ENCODE measurements at regions of chr6 and their contacts with region 1.

Region 1: GRCh38 chr6:135909737-135910387 is 58.4 kb downstream of the PDE7B start:
- DNase-seq: no peak
- ATAC-seq: peak; percentile 86
- H3K4me3 Mint-ChIP-seq: no peak overlapping the region
- H3K27ac Mint-ChIP-seq: no peak overlapping the region
- H3K4me1 Mint-ChIP-seq: peaks cover 2% of the 10 kb centered on the region
- H3K27me3 Mint-ChIP-seq: no peaks in the 10 kb centered on the region
- CTCF ChIP-seq: no peak

Region 2: DNA sequence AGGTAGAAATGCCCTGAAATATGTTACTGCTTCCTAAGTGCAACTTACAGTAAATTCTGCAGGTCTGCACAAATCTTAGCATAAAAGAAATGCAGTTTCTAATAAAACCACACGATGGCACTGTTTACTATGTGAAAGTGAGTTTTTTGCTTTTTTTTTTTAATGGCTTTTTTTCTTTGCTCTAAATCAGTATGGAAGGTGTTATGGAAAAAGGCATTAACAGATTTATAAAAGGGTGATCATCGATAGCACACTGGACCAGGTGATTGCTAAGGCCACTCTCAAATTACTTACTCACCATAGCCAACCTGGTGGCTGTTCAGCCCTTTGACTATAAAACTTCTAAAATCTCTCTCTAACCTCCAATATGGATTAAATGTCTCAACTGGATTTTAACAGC is 458.2 kb before region 1 on chr6:
- CTCF ChIA-PET with region 1: interaction called, 10 read pairs
- POLR2A ChIA-PET with region 1: no interaction called
- intact Hi-C with region 1: loop called (anchors 1 kb)
- DNase-seq: no peak
- ATAC-seq: peak; percentile 45
- H3K4me3 Mint-ChIP-seq: no peak overlapping the region
- H3K27ac Mint-ChIP-seq: no peak overlapping the region
- H3K4me1 Mint-ChIP-seq: peaks cover 8% of the 10 kb centered on the region
- H3K27me3 Mint-ChIP-seq: no peaks in the 10 kb centered on the region
- CTCF ChIP-seq: peak; percentile 54

Region 3: GRCh38 chr6:135535989-135536414 is 373.9 kb before region 1 on chr6:
- CTCF ChIA-PET with region 1: interaction called, 43 read pairs
- POLR2A ChIA-PET with region 1: no interaction called
- intact Hi-C with region 1: loop called (anchors 1 kb)
- DNase-seq: no peak
- ATAC-seq: no peak
- H3K4me3 Mint-ChIP-seq: no peak overlapping the region
- H3K27ac Mint-ChIP-seq: no peak overlapping the region
- H3K4me1 Mint-ChIP-seq: peaks cover 2% of the 10 kb centered on the region
- H3K27me3 Mint-ChIP-seq: peaks cover 13% of the 10 kb centered on the region
- CTCF ChIP-seq: no peak

Region 4: DNA sequence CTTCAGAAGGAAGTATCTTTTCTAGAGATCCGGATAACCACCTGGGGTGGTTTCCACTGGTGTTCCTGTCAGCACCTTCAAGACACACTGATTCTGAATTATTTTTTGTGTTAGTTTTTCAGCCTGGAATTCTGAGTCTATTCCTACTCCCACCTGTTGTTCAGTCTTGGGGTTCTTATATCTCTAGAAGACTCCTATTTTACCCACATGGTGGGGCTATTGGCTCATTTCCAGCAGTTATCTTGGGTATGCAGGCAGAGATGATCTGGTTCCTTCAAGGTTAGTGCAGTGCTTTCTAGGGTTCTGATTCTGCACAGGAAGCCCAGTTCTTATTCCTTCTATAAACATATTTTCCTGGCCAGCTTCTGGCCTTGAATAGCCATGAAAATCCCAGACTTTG is 234.0 kb before region 1 on chr6:
- CTCF ChIA-PET with region 1: interaction called, 45 read pairs
- POLR2A ChIA-PET with region 1: no interaction called
- intact Hi-C with region 1: loop called (anchors 1 kb)
- DNase-seq: no peak
- ATAC-seq: peak; percentile 70
- H3K4me3 Mint-ChIP-seq: no peak overlapping the region
- H3K27ac Mint-ChIP-seq: no peak overlapping the region
- H3K4me1 Mint-ChIP-seq: no peaks in the 10 kb centered on the region
- H3K27me3 Mint-ChIP-seq: no peaks in the 10 kb centered on the region
- CTCF ChIP-seq: peak; percentile 43

Region 5: DNA sequence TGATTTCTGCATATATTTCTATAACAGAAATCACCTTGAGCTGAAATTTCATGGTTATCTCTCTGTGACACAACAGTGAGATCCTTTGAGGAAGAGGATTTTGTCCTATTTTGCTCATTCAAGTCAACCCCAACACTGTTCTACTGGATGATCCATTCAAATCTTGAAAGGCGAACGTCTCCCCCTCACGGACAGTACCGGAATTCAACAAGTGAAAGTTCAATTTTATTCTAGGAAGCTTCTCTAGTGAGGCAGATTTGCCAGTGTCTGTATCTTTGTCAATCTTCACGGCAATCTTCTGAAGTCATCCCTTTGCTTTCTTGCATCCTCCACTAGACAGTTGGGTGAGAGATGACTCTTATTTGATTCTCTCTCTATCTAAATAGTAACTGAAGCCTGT is 150.0 kb before region 1 on chr6:
- CTCF ChIA-PET with region 1: interaction called, 11 read pairs
- POLR2A ChIA-PET with region 1: no interaction called
- intact Hi-C with region 1: no loop called
- DNase-seq: no peak
- ATAC-seq: no peak
- H3K4me3 Mint-ChIP-seq: no peak overlapping the region
- H3K27ac Mint-ChIP-seq: no peak overlapping the region
- H3K4me1 Mint-ChIP-seq: no peaks in the 10 kb centered on the region
- H3K27me3 Mint-ChIP-seq: peaks cover 2% of the 10 kb centered on the region
- CTCF ChIP-seq: no peak

Region 6: GRCh38 chr6:135921188-135921587 is 11.3 kb after region 1 on chr6:
- CTCF ChIA-PET with region 1: interaction called, 15 read pairs
- POLR2A ChIA-PET with region 1: no interaction called
- intact Hi-C with region 1: no loop called
- DNase-seq: no peak
- ATAC-seq: no peak
- H3K4me3 Mint-ChIP-seq: no peak overlapping the region
- H3K27ac Mint-ChIP-seq: no peak overlapping the region
- H3K4me1 Mint-ChIP-seq: peaks cover 2% of the 10 kb centered on the region
- H3K27me3 Mint-ChIP-seq: no peaks in the 10 kb centered on the region
- CTCF ChIP-seq: no peak

Region 7: GRCh38 chr6:136007345-136007744 is 97.5 kb after region 1 on chr6:
- CTCF ChIA-PET with region 1: no interaction called
- POLR2A ChIA-PET with region 1: no interaction called
- intact Hi-C with region 1: no loop called
- DNase-seq: no peak
- ATAC-seq: no peak
- H3K4me3 Mint-ChIP-seq: no peak overlapping the region
- H3K27ac Mint-ChIP-seq: no peak overlapping the region
- H3K4me1 Mint-ChIP-seq: no peaks in the 10 kb centered on the region
- H3K27me3 Mint-ChIP-seq: no peaks in the 10 kb centered on the region
- CTCF ChIP-seq: no peak

Region 8: GRCh38 chr6:136226027-136226673 is 316.3 kb after region 1 on chr6:
- CTCF ChIA-PET with region 1: interaction called, 24 read pairs
- POLR2A ChIA-PET with region 1: no interaction called
- intact Hi-C with region 1: loop called (anchors 1 kb)
- DNase-seq: no peak
- ATAC-seq: peak; percentile 93
- H3K4me3 Mint-ChIP-seq: peak overlapping the region; percentile 53
- H3K27ac Mint-ChIP-seq: no peak overlapping the region
- H3K4me1 Mint-ChIP-seq: peaks cover 16% of the 10 kb centered on the region
- H3K27me3 Mint-ChIP-seq: no peaks in the 10 kb centered on the region
- CTCF ChIP-seq: peak; percentile 99

Measured in activated B cell treated with CpG ODN at 0.5 μM for 24 hours (primary cell).